Activated T-helper 1 cell treated with anti-CD3 and anti-CD28 coated beads, Interleukin-12 subunit alpha, Interleukin-12 subunit beta, Interleukin-2, Interleukin-4 antibody, amounts not matched to agents 30 ng/mL and 10 ng/mL and 1 ng/mL, durations not matched to agents 14 hours and 24 hours and 36 hours (primary cell): ENCODE measurements at regions of chr10 and their contacts with region 1.

Region 1: DNA sequence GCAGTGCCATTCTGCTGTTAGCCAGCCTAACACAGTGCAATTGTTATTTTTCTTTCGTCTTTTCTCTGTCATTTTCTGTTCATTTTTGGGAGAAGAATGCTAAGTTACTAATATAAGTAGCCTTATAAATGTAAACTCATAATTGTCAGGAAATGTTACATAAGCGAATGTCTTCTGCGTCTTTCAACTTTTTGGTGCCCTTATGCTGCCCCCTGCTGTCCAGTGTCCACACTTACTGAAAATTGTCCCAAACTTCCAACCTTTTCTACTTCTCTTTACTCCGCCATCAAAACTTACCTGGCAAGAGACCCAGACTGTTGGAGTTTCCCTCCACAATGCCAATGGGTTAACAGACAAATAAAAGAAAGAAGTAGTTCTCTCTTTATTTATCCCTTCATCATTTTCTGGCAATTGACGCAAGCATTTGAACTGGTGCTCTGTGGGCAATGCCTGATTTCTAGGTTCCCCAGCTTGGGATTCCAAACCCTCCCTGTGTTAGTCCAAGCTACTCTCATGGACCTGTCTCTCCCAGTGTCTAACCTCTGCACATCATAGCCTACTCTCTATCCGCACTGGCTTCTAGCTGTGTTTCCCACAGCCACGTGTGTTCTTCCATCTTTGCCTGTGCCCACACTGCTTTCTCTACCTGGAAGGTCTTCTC is 21.0 kb upstream of the EPC1 start:
- DNase-seq: peak; percentile 49
- H3K4me3 Mint-ChIP-seq: no peak overlapping the region
- H3K27ac Mint-ChIP-seq: peak overlapping the region; percentile 8
- H3K4me1 Mint-ChIP-seq: peaks cover 45% of the 10 kb centered on the region
- H3K27me3 Mint-ChIP-seq: no peaks in the 10 kb centered on the region

Region 2: DNA sequence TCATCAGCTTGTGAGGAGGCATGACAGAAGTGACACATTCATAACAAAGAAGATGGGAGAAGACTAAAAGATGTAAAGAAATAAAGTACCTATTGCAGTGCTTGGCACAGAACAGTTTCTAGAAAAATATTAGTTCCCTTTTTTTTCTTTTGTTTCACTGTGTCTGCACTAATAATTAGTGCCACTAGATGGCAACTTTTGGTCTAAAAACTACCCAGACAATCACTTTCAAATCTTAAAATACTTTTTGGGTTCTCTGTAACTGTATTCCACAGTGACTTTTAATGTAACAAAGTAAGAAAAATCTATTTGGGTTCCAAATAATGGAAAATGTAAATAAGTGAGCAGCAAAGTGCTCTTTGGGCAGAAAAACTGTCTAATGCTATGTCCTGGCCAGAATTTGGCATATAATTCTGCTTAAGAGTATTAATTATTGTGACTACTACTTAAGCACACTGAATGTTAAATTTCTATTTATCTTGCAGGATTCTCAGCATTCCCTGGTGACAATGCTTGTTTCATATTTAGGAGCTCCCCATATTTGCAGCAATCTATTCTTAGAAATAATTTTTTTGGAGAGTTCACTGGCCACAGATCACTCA is 176.9 kb before region 1 on chr10:
- intact Hi-C with region 1: loop called (anchors 1 kb)
- DNase-seq: no peak
- H3K4me3 Mint-ChIP-seq: no peak overlapping the region
- H3K27ac Mint-ChIP-seq: no peak overlapping the region
- H3K4me1 Mint-ChIP-seq: peaks cover 7% of the 10 kb centered on the region
- H3K27me3 Mint-ChIP-seq: no peaks in the 10 kb centered on the region

Region 3: GRCh38 chr10:32256613-32257437 is 111.1 kb before region 1 on chr10:
- intact Hi-C with region 1: loop called (anchors 1 kb)
- DNase-seq: peak; percentile 48
- H3K4me3 Mint-ChIP-seq: no peak overlapping the region
- H3K27ac Mint-ChIP-seq: peak overlapping the region; percentile 66
- H3K4me1 Mint-ChIP-seq: peaks cover 17% of the 10 kb centered on the region
- H3K27me3 Mint-ChIP-seq: no peaks in the 10 kb centered on the region

Region 4: DNA sequence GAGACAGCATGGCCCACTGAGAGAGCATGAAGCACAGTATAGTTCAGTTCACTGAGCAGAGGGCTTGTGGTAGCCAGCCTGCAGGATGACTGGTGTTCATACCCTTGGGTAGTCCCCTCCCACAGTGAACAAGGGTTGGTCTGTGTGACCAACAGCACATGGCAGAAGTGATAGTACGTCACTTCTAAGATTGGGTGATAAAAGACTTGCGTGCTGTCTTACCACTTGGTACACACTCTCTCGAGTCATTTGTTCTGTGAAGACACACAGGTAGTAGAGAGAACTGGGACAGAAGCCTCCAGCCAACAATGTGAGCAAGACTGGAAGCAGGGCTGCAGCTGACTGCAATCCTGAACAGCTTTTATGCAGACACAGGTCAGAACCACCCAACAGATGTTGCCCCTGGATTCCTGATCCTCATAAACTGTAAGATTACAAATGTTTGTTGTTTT is 35.6 kb before region 1 on chr10:
- intact Hi-C with region 1: loop called (anchors 1 kb)
- DNase-seq: peak; percentile 71
- H3K4me3 Mint-ChIP-seq: peak overlapping the region; percentile 80
- H3K27ac Mint-ChIP-seq: peak overlapping the region; percentile 97
- H3K4me1 Mint-ChIP-seq: peaks cover 93% of the 10 kb centered on the region
- H3K27me3 Mint-ChIP-seq: no peaks in the 10 kb centered on the region

Region 5: GRCh38 chr10:32357056-32357735 is 10.7 kb before region 1 on chr10:
- intact Hi-C with region 1: loop called (anchors 1 kb)
- DNase-seq: no peak
- H3K4me3 Mint-ChIP-seq: peak overlapping the region; percentile 61
- H3K27ac Mint-ChIP-seq: peak overlapping the region; percentile 93
- H3K4me1 Mint-ChIP-seq: peaks cover 73% of the 10 kb centered on the region
- H3K27me3 Mint-ChIP-seq: no peaks in the 10 kb centered on the region

Region 6: GRCh38 chr10:32795598-32796183 is 427.8 kb after region 1 on chr10:
- intact Hi-C with region 1: no loop called
- DNase-seq: no peak
- H3K4me3 Mint-ChIP-seq: no peak overlapping the region
- H3K27ac Mint-ChIP-seq: no peak overlapping the region
- H3K4me1 Mint-ChIP-seq: no peaks in the 10 kb centered on the region
- H3K27me3 Mint-ChIP-seq: peaks cover 2% of the 10 kb centered on the region